Common myeloid progenitor, CD34-positive (primary cell): ENCODE measurements at regions of chr10 and their contacts with region 1.

Region 1: GRCh38 chr10:30231071-30231652 is 117.9 kb downstream of the MTPAP start:
- DNase-seq: peak; percentile 25 to 86 (median 77)
- H3K4me3 ChIP-seq: peak overlapping the region in 1 of 7 experiments; percentile 10
- H3K27ac ChIP-seq: no peak overlapping the region
- H3K4me1 ChIP-seq: peaks cover 0 to 21% (median 11%) of the 10 kb centered on the region in 4 experiments
- H3K27me3 ChIP-seq: no peaks in the 10 kb centered on the region

Region 2: GRCh38 chr10:28892816-28893547 is 1338.2 kb before region 1 on chr10:
- CTCF ChIA-PET with region 1: no interaction called
- POLR2A ChIA-PET with region 1: no interaction called
- DNase-seq: no peak
- H3K4me3 ChIP-seq: no peak overlapping the region
- H3K27ac ChIP-seq: no peak overlapping the region
- H3K4me1 ChIP-seq: no peaks in the 10 kb centered on the region
- H3K27me3 ChIP-seq: no peaks in the 10 kb centered on the region

Region 3: GRCh38 chr10:30241422-30242110 is 10.4 kb after region 1 on chr10:
- CTCF ChIA-PET with region 1: interaction called, 19 read pairs
- POLR2A ChIA-PET with region 1: no interaction called
- DNase-seq: no peak
- H3K4me3 ChIP-seq: no peak overlapping the region
- H3K27ac ChIP-seq: no peak overlapping the region
- H3K4me1 ChIP-seq: peaks cover 0 to 3% (median under 1%) of the 10 kb centered on the region in 4 experiments
- H3K27me3 ChIP-seq: no peaks in the 10 kb centered on the region